ENCODE measurements at regions of chr16 and their contacts with region 1.

Region 1: GRCh38 chr16:86519649-86520316 is 9.5 kb downstream of the FOXF1 start:
- DNase-seq: peak; percentile 82
- H3K4me3 ChIP-seq: peak overlapping the region in 1 of 2 experiments; percentile 38; a peak in 2 of 4 replicates
- H3K27ac ChIP-seq: no peak overlapping the region
- H3K4me1 ChIP-seq: no peaks in the 10 kb centered on the region
- H3K27me3 ChIP-seq: peaks cover 82% of the 10 kb centered on the region
- CTCF ChIP-seq: peak; percentile 89
- EP300 ChIP-seq: no peak
- RAD21 ChIP-seq: peak; percentile 71

Region 2: DNA sequence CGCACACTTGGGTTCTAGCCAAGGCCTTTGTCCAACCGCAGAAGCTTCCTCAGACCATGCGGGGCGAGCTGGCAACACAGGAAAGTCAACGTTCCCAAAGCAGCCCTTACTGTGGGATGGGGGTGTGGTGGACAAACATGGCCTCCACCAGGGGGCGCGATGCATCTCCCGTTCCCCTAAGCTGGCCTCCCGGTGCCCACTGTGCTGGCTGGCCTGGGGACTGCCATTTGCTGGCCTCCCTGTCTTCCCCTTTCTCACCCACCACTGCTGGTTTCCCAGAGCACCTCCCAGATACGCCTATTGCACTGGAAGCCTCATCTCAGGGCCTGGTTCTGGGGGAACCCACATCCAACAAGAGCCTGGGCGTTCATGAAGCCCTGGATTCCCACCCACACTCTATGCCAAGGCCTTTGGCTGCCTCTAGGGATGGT is 475.5 kb before region 1 on chr16:
- CTCF ChIA-PET with region 1: interaction called, 17 read pairs
- POLR2A ChIA-PET with region 1: no interaction called
- DNase-seq: peak; percentile 71
- H3K4me3 ChIP-seq: no peak overlapping the region; a peak in 1 of 4 replicates
- H3K27ac ChIP-seq: no peak overlapping the region
- H3K4me1 ChIP-seq: no peaks in the 10 kb centered on the region
- H3K27me3 ChIP-seq: peaks cover 84% of the 10 kb centered on the region
- CTCF ChIP-seq: peak; percentile 64
- EP300 ChIP-seq: no peak
- RAD21 ChIP-seq: peak; percentile 26

Region 3: GRCh38 chr16:86314402-86315025 is 205.3 kb before region 1 on chr16:
- CTCF ChIA-PET with region 1: no interaction called
- POLR2A ChIA-PET with region 1: no interaction called
- DNase-seq: no peak
- H3K4me3 ChIP-seq: no peak overlapping the region
- H3K27ac ChIP-seq: no peak overlapping the region
- H3K4me1 ChIP-seq: no peaks in the 10 kb centered on the region
- H3K27me3 ChIP-seq: peaks cover 63% of the 10 kb centered on the region
- CTCF ChIP-seq: no peak
- EP300 ChIP-seq: no peak
- RAD21 ChIP-seq: no peak

Region 4: GRCh38 chr16:86343027-86343787 is 176.6 kb before region 1 on chr16:
- CTCF ChIA-PET with region 1: interaction called, 40 read pairs
- POLR2A ChIA-PET with region 1: no interaction called
- DNase-seq: peak; percentile 45
- H3K4me3 ChIP-seq: peak overlapping the region in 1 of 2 experiments; percentile 40; a peak in 3 of 4 replicates
- H3K27ac ChIP-seq: peak overlapping the region in 1 of 2 experiments; percentile 55; a peak in 3 of 4 replicates
- H3K4me1 ChIP-seq: peaks cover 11 to 17% of the 10 kb centered on the region in 2 experiments; a peak in 3 of 4 replicates
- H3K27me3 ChIP-seq: no peaks in the 10 kb centered on the region
- CTCF ChIP-seq: no peak
- EP300 ChIP-seq: no peak
- RAD21 ChIP-seq: no peak

Region 5: GRCh38 chr16:86491256-86492023 is 28.3 kb before region 1 on chr16:
- CTCF ChIA-PET with region 1: interaction called, 10 read pairs
- POLR2A ChIA-PET with region 1: no interaction called
- DNase-seq: no peak
- H3K4me3 ChIP-seq: no peak overlapping the region
- H3K27ac ChIP-seq: no peak overlapping the region
- H3K4me1 ChIP-seq: no peaks in the 10 kb centered on the region
- H3K27me3 ChIP-seq: peaks cover 100% of the 10 kb centered on the region
- CTCF ChIP-seq: no peak
- EP300 ChIP-seq: no peak
- RAD21 ChIP-seq: no peak

Region 6: GRCh38 chr16:86505185-86505898 is 14.4 kb before region 1 on chr16:
- CTCF ChIA-PET with region 1: interaction called, 24 read pairs
- POLR2A ChIA-PET with region 1: no interaction called
- DNase-seq: no peak
- H3K4me3 ChIP-seq: no peak overlapping the region
- H3K27ac ChIP-seq: no peak overlapping the region
- H3K4me1 ChIP-seq: no peaks in the 10 kb centered on the region
- H3K27me3 ChIP-seq: peaks cover 95% of the 10 kb centered on the region
- CTCF ChIP-seq: no peak
- EP300 ChIP-seq: no peak
- RAD21 ChIP-seq: no peak

Region 7: DNA sequence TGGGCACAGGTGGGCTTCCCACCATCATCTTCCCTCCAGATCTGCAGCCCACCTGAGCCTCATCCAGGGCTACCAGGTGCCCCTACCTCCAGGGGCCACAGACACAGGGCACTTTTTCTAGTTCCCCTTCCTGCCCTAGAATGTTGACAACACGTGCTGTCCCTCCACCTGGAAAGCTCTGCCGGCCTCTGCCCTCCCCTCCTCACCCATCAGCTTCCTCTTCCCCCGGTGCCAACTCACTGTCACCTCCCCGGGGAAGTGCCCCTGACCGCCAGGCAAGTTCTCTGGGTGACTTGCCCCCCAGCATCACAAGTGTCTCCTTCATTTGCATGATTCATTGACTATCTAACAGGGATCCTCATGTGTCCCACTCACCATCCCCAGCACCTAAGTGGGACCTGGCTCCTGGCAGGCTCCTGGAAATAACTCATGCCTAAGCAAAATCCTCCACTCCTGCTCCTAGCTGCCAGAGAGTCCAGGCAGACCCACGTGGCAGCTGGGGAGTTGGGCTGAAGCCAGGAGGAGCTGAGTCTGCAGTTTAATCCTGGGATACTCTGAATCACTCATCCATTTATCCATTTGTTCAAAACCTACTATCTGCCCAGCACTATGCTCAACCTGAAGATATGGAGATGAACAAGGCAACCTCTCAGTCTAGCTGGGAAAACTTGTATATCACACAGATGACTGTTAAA is 362.9 kb after region 1 on chr16:
- CTCF ChIA-PET with region 1: no interaction called
- POLR2A ChIA-PET with region 1: no interaction called
- DNase-seq: no peak
- H3K4me3 ChIP-seq: no peak overlapping the region
- H3K27ac ChIP-seq: no peak overlapping the region
- H3K4me1 ChIP-seq: peaks cover 0 to 6% of the 10 kb centered on the region in 2 experiments; a peak in 1 of 4 replicates
- H3K27me3 ChIP-seq: peaks cover 74% of the 10 kb centered on the region; the same call in 1 of the 2 replicates
- CTCF ChIP-seq: no peak
- EP300 ChIP-seq: no peak
- RAD21 ChIP-seq: no peak